ENCODE measurements at regions of chr4 and their contacts with region 1.

Region 1: GRCh38 chr4:18033111-18034085 is 11.8 kb upstream of the LCORL start:
- DNase-seq: no peak
- H3K4me3 ChIP-seq: no peak overlapping the region
- H3K27ac ChIP-seq: no peak overlapping the region
- H3K27me3 ChIP-seq: peaks cover 5% of the 10 kb centered on the region
- CTCF ChIP-seq: no peak

Region 2: GRCh38 chr4:18012134-18012806 is 21.1 kb before region 1 on chr4:
- CTCF ChIA-PET with region 1: interaction called, 12 read pairs
- POLR2A ChIA-PET with region 1: no interaction called
- DNase-seq: no peak
- H3K4me3 ChIP-seq: no peak overlapping the region
- H3K27ac ChIP-seq: no peak overlapping the region
- H3K27me3 ChIP-seq: no peaks in the 10 kb centered on the region
- CTCF ChIP-seq: no peak

Measured in AG04450 (cell line).